T-cell (primary cell): ENCODE measurements at regions of chr7 and their contacts with region 1.

Region 1: DNA sequence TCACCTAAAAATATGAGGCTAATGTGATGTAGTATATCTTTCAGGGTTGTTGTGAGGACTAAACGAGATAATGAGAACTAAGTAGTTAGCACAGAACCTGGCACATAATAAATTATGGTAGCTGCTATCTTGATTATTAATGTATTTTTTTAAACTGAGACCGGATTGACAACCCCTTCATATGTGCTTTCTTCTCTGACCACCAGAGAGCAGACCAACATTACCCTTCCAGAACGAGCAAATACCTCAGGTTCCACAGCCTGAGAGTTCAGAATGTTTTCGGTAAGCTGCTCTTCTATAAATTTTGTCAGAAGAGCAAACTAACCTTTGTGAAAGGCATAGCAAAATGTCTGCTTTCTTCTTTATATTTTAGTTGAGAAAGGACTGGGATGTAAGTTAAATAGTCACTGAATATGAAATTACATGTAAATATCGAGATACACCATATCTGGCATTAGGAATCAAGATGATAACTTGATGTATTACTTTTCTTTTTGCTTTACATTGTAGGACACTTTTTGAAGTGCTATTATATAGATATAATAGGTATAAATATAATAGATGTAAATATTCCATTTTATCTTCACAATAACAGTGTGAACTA is 13.6 kb upstream of the BPGM start:
- DNase-seq: peak in 28 of 35 experiments; percentile 5 to 80 (median 34)
- ATAC-seq: peak; percentile 79 to 85 (median 80)
- H3K4me3 ChIP-seq: no peak overlapping the region
- H3K4me3 Mint-ChIP-seq: no peak overlapping the region
- H3K27ac ChIP-seq: no peak overlapping the region
- H3K27ac Mint-ChIP-seq: no peak overlapping the region
- H3K4me1 ChIP-seq: peaks cover 0 to 6% of the 10 kb centered on the region in 2 experiments
- H3K4me1 Mint-ChIP-seq: peaks cover 21 to 25% (median 24%) of the 10 kb centered on the region in 3 donors
- H3K27me3 ChIP-seq: peaks cover 0 to 5% of the 10 kb centered on the region in 2 experiments
- H3K27me3 Mint-ChIP-seq: peaks cover 8 to 18% of the 10 kb centered on the region in 2 donors

Region 2: DNA sequence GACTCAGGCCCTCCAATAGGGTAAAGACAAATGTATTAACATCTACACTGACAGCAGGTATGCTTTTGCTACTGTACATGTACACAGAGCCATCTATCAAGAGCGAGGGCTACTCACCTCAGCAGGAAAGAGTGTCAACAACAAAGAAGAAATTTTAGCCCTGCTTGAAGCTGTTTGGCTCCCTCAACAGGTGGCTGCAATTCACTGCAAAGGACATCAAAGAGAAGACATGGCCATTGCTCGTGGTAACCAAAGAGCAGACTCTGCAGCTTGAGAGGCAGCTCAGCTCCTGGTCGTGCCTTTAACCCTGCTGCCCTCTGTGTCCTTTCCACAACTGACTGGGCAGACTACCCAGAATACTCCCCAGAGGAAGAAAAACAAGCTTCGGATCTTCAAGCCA is 79.1 kb before region 1 on chr7:
- CTCF ChIA-PET with region 1: no interaction called
- POLR2A ChIA-PET with region 1: no interaction called
- DNase-seq: no peak
- ATAC-seq: no peak
- H3K4me3 ChIP-seq: no peak overlapping the region
- H3K4me3 Mint-ChIP-seq: no peak overlapping the region
- H3K27ac ChIP-seq: no peak overlapping the region
- H3K27ac Mint-ChIP-seq: no peak overlapping the region
- H3K4me1 ChIP-seq: no peaks in the 10 kb centered on the region
- H3K4me1 Mint-ChIP-seq: no peaks in the 10 kb centered on the region
- H3K27me3 ChIP-seq: peaks cover 0 to 6% of the 10 kb centered on the region in 2 experiments
- H3K27me3 Mint-ChIP-seq: peaks cover 4 to 26% of the 10 kb centered on the region in 2 donors

Region 3: DNA sequence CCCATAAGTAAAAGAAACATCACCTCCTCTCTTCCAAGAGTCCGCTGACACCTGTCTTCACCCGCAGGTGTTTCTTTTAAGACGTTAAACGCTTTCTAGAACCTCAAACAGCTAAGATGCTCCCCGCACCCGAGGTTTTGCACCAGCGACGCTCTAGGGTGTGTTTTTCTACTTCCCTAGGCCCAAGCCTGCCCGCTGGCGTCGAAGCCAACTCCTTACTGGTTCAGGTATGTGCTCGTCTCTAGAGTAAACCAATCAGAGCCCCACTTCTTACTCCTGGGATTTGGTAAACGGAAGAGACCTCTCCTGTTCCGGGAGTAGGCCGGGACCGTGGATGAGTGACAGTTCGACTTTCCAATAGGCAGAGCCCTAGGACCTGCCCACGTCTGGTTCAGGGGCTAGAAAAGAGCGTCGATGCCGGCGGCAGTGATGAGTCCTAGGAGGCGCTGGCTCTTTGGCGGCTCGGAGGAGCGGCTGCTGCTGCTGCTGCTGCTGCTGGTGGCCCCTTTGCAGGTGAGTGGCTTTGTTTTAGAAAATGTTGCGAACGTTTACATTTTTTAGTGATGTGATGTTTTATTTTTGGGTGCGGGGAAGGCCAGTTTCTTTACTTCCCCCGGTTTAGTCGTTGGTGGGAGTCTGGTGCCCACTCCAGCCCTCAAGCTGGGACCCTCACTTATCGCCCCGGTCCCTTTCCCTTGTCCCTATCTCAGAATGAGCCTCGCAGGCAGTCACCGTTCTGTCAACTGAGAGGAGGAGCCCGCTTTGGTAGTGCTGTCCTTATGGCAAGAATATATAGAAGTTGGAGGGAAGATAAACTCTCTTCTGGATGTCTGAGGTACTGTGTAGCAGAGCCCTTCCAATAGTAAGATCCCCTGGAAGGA is 13.6 kb after region 1 on chr7 and contains the start of gene BPGM:
- CTCF ChIA-PET with region 1: interaction called, 13 to 35 read pairs
- POLR2A ChIA-PET with region 1: interaction called, 3 to 9 read pairs
- DNase-seq: peak; percentile 88 to 100 (median 98)
- ATAC-seq: peak; percentile 94 to 96 (median 96)
- H3K4me3 ChIP-seq: peak within 1 kb of the TSS; percentile 81 to 82
- H3K4me3 Mint-ChIP-seq: no peak within 1 kb of the TSS
- H3K27ac ChIP-seq: peak within 1 kb of the TSS; percentile 94
- H3K27ac Mint-ChIP-seq: no peak within 1 kb of the TSS
- H3K4me1 ChIP-seq: peaks cover 18% of the 10 kb centered on the region in 2 experiments
- H3K4me1 Mint-ChIP-seq: peaks cover 33 to 39% (median 34%) of the 10 kb centered on the region in 3 donors
- H3K27me3 ChIP-seq: no peaks in the 10 kb centered on the region
- H3K27me3 Mint-ChIP-seq: no peaks in the 10 kb centered on the region
- total RNA-seq, gene BPGM: 16.4 to 20.3 (median 18.3) TPM

Region 4: DNA sequence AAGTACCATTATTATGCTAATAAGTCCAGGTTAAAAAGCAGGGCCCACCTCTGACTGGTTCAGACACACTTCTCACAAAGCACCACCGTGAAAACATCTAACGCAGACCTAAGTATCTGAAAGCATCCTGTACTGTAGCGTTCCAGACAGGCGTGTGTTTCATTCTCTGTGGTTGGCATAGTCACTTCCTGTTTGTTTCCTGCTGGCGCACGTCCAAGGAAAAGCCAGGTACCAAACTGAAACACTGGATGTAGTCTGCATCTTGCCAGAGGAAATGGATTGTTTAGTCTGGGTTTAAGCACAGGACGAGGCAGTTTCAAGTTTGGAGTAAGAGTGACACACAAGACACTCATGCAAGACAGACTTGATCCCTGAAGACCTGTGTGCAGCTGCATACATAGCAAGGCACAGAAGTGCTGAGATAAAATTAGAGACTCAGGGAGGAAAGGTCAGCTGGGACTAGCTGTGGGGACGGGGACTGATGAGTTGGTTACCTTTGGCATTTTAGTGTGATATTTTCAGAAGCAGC is 36.9 kb after region 1 on chr7:
- CTCF ChIA-PET with region 1: interaction called, 4 to 10 read pairs
- POLR2A ChIA-PET with region 1: no interaction called
- DNase-seq: peak; percentile 64 to 92 (median 86)
- ATAC-seq: peak; percentile 96 to 98 (median 96)
- H3K4me3 ChIP-seq: peak overlapping the region in 1 of 2 donors; percentile 12
- H3K4me3 Mint-ChIP-seq: peak overlapping the region; percentile 48 to 74 (median 57)
- H3K27ac ChIP-seq: peak overlapping the region; percentile 84
- H3K27ac Mint-ChIP-seq: peak overlapping the region; percentile 99
- H3K4me1 ChIP-seq: peaks cover 17 to 42% of the 10 kb centered on the region in 2 experiments
- H3K4me1 Mint-ChIP-seq: peaks cover 53 to 60% (median 59%) of the 10 kb centered on the region in 3 donors
- H3K27me3 ChIP-seq: no peaks in the 10 kb centered on the region
- H3K27me3 Mint-ChIP-seq: no peaks in the 10 kb centered on the region

Region 5: GRCh38 chr7:134701272-134701671 is 68.2 kb after region 1 on chr7:
- CTCF ChIA-PET with region 1: interaction called, 7 to 43 read pairs
- POLR2A ChIA-PET with region 1: no interaction called
- DNase-seq: peak in 12 of 35 experiments; percentile 10 to 62 (median 22)
- ATAC-seq: peak; percentile 53 to 79 (median 64)
- H3K4me3 ChIP-seq: no peak overlapping the region
- H3K4me3 Mint-ChIP-seq: no peak overlapping the region
- H3K27ac ChIP-seq: no peak overlapping the region
- H3K27ac Mint-ChIP-seq: no peak overlapping the region
- H3K4me1 ChIP-seq: no peaks in the 10 kb centered on the region
- H3K4me1 Mint-ChIP-seq: no peaks in the 10 kb centered on the region
- H3K27me3 ChIP-seq: no peaks in the 10 kb centered on the region
- H3K27me3 Mint-ChIP-seq: peaks cover 0 to 2% of the 10 kb centered on the region in 2 donors

Region 6: DNA sequence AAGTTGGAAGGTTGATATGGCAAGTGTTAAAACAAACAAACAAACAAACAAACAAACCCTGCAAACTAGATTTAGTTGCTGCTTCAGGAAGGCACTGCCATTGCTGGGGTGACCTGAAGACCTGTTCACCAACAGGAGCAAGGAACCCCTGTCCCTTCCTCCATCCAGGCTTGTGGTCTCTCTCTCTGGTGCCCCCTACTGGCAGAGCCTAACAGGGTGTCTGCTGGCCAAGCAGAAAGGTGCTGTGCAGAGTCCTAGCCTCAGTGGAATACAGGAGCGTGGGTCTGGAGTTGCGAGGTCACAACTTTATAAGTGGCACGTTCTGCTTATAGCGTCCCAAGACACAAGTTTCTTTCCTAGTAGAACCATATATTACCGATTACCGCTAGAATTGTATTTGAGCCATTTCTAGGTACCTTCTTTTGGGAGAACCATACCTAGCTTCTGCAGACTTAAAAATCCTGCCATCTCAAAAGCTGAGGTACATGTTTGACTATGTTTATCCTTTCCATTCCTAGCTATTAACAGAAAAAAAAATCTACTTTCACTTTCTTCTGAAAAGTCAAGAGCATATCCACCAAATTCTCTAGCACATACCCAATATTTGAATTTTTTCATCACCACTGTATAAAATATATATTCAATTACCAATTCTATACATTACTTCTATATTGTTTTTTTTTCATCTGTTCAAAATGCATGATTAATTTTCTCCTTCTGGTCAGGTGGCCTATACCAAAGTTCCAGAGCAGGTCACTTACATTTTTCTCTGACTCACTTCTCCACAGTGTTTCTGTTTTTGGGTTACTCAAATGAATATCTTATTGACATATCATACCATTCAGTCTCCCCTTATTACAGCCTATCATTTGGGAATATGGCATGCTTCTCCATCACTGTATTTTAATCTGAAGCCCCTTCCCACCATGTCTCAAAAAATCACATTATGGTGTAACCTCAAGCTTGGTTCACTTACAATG is 117.3 kb after region 1 on chr7:
- CTCF ChIA-PET with region 1: interaction called, 10 to 23 read pairs
- POLR2A ChIA-PET with region 1: no interaction called
- DNase-seq: peak; percentile 12 to 78 (median 49)
- ATAC-seq: peak; percentile 67 to 83 (median 74)
- H3K4me3 ChIP-seq: no peak overlapping the region
- H3K4me3 Mint-ChIP-seq: no peak overlapping the region
- H3K27ac ChIP-seq: no peak overlapping the region
- H3K27ac Mint-ChIP-seq: no peak overlapping the region
- H3K4me1 ChIP-seq: no peaks in the 10 kb centered on the region
- H3K4me1 Mint-ChIP-seq: no peaks in the 10 kb centered on the region
- H3K27me3 ChIP-seq: peaks cover 0 to 6% of the 10 kb centered on the region in 2 experiments
- H3K27me3 Mint-ChIP-seq: peaks cover 0 to under 1% of the 10 kb centered on the region in 2 donors

Region 7: DNA sequence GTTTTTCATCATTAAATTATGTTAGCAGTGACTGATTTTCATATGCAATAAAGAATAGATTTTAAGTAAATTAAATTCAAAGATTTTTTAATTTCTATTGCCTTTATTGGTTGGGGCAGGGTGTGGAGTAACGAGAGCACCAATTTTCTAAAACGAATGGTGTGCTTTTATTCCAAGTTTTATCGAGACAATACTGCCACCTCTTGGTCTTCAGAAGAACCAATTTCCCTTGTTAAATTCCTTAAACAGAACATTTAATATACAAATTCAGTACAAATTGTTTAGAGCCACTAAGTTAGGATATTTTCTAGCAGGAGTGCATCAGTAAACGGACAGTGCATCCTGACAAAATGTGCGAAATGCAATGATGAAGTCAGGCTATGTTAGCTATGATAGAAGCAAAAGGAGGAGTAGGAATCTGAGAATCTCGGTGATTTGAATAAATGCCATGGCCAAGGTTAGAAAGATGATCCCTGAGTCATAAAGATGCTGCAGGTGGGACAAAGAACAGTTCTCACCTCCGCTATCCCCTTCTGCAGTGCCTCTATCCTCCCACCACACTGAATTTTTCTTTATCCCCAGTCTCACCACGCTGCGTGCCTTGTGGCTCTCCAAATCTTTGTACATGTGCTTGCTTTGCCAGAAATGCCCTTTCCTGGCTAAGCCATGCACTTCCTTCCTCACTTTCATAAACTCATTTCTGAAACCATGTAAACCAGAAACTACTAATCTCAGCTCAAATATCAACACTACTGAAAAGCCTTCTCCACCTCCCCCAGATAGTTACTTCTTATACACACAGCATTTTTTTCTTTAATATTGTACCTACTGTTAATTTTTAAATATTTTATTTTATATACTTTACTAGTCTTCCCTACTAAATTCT is 321.4 kb after region 1 on chr7:
- CTCF ChIA-PET with region 1: interaction called, 9 to 26 read pairs
- POLR2A ChIA-PET with region 1: no interaction called
- DNase-seq: peak in 1 of 35 experiments; percentile 64
- ATAC-seq: peak in 2 of 4 experiments; percentile 38 to 45
- H3K4me3 ChIP-seq: no peak overlapping the region
- H3K4me3 Mint-ChIP-seq: no peak overlapping the region
- H3K27ac ChIP-seq: no peak overlapping the region
- H3K27ac Mint-ChIP-seq: no peak overlapping the region
- H3K4me1 ChIP-seq: no peaks in the 10 kb centered on the region
- H3K4me1 Mint-ChIP-seq: no peaks in the 10 kb centered on the region
- H3K27me3 ChIP-seq: peaks cover 0 to 3% of the 10 kb centered on the region in 2 experiments
- H3K27me3 Mint-ChIP-seq: no peaks in the 10 kb centered on the region